PC-9 (cell line): ENCODE measurements at regions of chr7 and their contacts with region 1.

Region 1: DNA sequence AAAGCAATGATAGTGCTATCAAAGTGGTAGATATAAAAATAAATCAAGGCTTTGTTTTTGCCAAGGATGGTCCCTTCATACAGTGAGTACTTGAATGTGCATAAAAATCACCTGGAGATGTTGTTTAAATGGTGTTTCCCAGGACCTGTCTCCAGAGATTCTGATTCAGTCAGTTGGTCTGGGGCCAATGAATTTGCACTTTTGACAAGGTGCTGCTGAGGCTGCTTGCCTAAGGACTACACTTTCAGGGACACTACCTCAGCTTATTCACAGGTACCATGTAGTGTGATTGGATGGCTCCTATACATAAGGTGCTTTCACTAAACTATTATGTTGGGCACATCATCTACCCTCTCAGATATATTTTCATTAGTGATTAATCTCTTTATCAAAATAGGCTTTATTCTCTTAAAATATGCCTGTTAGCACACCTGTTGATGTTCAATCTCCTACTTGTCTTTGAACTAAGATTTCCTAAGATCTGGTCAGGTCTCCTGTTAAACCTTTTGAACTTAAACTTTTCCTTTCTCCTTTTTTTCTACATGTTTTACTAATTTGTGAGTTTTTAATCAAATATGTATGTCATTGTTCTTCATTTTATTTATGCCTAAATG is 24.3 kb downstream of the CAPZA2 start:
- DNase-seq: no peak
- H3K4me3 ChIP-seq: no peak overlapping the region
- H3K27ac ChIP-seq: no peak overlapping the region
- H3K4me1 ChIP-seq: no peaks in the 10 kb centered on the region
- H3K27me3 ChIP-seq: no peaks in the 10 kb centered on the region
- CTCF ChIP-seq: no peak

Region 2: GRCh38 chr7:117480978-117481377 is 594.3 kb after region 1 on chr7:
- CTCF ChIA-PET with region 1: no interaction called
- POLR2A ChIA-PET with region 1: interaction called, 18 read pairs
- intact Hi-C with region 1: no loop called
- DNase-seq: no peak
- H3K4me3 ChIP-seq: no peak overlapping the region
- H3K27ac ChIP-seq: no peak overlapping the region
- H3K4me1 ChIP-seq: no peaks in the 10 kb centered on the region
- H3K27me3 ChIP-seq: no peaks in the 10 kb centered on the region
- CTCF ChIP-seq: no peak

Region 3: DNA sequence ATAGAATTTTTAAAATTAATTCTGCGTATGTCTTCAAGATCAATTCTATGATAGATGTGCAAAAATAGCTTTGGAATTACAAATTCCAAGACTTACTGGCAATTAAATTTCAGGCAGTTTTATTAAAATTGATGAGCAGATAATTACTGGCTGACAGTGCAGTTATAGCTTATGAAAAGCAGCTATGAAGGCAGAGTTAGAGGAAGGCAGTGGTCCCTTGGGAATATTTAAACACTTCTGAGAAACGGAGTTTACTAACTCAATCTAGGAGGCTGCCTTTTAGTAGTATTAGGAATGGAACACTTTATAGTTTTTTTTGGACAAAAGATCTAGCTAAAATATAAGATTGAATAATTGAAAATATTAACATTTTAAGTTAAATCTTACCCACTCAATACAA is 664.0 kb after region 1 on chr7:
- CTCF ChIA-PET with region 1: no interaction called
- POLR2A ChIA-PET with region 1: interaction called, 15 read pairs
- intact Hi-C with region 1: no loop called
- DNase-seq: no peak
- H3K4me3 ChIP-seq: no peak overlapping the region
- H3K27ac ChIP-seq: no peak overlapping the region
- H3K4me1 ChIP-seq: no peaks in the 10 kb centered on the region
- H3K27me3 ChIP-seq: no peaks in the 10 kb centered on the region
- CTCF ChIP-seq: no peak